ENCODE measurements at regions of chr16 and their contacts with region 1.

Region 1: DNA sequence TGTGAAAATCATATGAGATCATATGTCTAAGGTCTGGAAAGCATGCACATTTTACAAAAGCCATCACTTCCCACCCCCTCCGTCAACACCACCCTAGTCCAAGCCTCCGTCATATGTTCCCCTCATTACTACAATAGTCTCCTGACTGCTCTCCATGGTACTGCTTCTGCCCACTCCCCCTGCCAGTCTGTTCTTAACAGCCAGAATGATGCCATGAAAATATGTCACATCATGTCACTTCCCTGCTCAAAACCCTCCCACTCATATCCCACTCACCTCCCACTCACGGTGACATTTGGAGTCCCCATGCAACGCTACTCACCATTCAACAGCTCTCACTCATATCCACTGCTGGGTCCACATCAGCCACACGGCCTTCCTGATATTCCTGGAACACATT is 432.3 kb downstream of the XYLT1 start:
- DNase-seq: no peak
- ATAC-seq: no peak
- H3K4me3 ChIP-seq: no peak overlapping the region
- H3K4me3 Mint-ChIP-seq: no peak overlapping the region
- H3K27ac ChIP-seq: no peak overlapping the region
- H3K27ac Mint-ChIP-seq: no peak overlapping the region
- H3K4me1 ChIP-seq: peaks cover 13% of the 10 kb centered on the region
- H3K4me1 Mint-ChIP-seq: no peaks in the 10 kb centered on the region
- H3K27me3 ChIP-seq: no peaks in the 10 kb centered on the region
- H3K27me3 Mint-ChIP-seq: no peaks in the 10 kb centered on the region
- CTCF ChIP-seq: no peak

Region 2: GRCh38 chr16:16857603-16858313 is 180.7 kb before region 1 on chr16:
- CTCF ChIA-PET with region 1: no interaction called
- POLR2A ChIA-PET with region 1: no interaction called
- intact Hi-C with region 1: no loop called
- DNase-seq: no peak
- ATAC-seq: no peak
- H3K4me3 ChIP-seq: no peak overlapping the region
- H3K4me3 Mint-ChIP-seq: no peak overlapping the region
- H3K27ac ChIP-seq: no peak overlapping the region
- H3K27ac Mint-ChIP-seq: no peak overlapping the region
- H3K4me1 ChIP-seq: no peaks in the 10 kb centered on the region
- H3K4me1 Mint-ChIP-seq: no peaks in the 10 kb centered on the region
- H3K27me3 ChIP-seq: peaks cover 0 to 5% of the 10 kb centered on the region in 2 experiments
- H3K27me3 Mint-ChIP-seq: peaks cover 23% of the 10 kb centered on the region
- CTCF ChIP-seq: no peak

Region 3: DNA sequence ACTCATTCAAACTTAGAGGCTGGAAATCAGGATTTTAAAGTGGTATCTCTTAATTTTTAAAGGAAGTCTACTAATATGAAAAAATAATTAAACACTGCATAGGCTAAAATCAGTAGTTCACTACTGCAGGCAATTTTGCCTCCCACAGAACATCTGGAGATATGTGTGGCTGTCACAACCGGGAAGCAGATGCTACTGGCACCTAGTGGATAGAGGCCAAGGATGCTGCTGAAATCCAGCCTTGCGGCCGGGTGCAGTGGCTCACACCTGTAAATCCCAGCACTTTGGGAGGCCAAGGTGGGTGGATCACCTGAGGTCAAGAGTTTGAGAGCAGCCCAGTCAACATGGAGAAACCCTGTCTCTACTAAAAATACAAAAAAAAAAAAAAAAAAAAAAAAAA is 41.6 kb before region 1 on chr16:
- CTCF ChIA-PET with region 1: no interaction called
- POLR2A ChIA-PET with region 1: no interaction called
- intact Hi-C with region 1: loop called in 1 of 2 experiments (anchors 5 kb)
- DNase-seq: no peak
- ATAC-seq: no peak
- H3K4me3 ChIP-seq: no peak overlapping the region
- H3K4me3 Mint-ChIP-seq: no peak overlapping the region
- H3K27ac ChIP-seq: no peak overlapping the region
- H3K27ac Mint-ChIP-seq: no peak overlapping the region
- H3K4me1 ChIP-seq: peaks cover 17% of the 10 kb centered on the region
- H3K4me1 Mint-ChIP-seq: peaks cover 22% of the 10 kb centered on the region
- H3K27me3 ChIP-seq: no peaks in the 10 kb centered on the region
- H3K27me3 Mint-ChIP-seq: no peaks in the 10 kb centered on the region
- CTCF ChIP-seq: no peak

Region 4: DNA sequence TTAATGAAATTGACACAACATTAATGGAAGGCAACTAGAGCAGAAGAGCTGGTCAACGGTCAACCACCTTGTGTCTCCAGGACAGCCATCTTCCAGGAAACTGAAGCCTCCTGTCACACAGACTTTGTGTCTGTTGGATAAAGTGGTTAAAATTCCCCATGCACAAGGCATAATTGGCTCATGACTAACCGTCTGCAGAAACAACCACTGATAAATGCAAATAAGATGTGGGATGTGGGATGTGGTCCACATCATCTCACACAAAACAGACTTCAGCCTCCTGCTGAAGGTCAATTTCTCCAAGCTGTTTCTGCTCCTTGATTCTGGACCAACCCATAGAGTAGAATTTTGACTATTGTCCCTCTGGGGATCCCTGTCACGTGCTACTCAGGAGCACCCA is 459.2 kb after region 1 on chr16:
- CTCF ChIA-PET with region 1: no interaction called
- POLR2A ChIA-PET with region 1: no interaction called
- intact Hi-C with region 1: no loop called
- DNase-seq: no peak
- ATAC-seq: no peak
- H3K4me3 ChIP-seq: no peak overlapping the region
- H3K4me3 Mint-ChIP-seq: no peak overlapping the region
- H3K27ac ChIP-seq: no peak overlapping the region
- H3K27ac Mint-ChIP-seq: no peak overlapping the region
- H3K4me1 ChIP-seq: no peaks in the 10 kb centered on the region
- H3K4me1 Mint-ChIP-seq: no peaks in the 10 kb centered on the region
- H3K27me3 ChIP-seq: no peaks in the 10 kb centered on the region
- H3K27me3 Mint-ChIP-seq: no peaks in the 10 kb centered on the region
- CTCF ChIP-seq: no peak